Common myeloid progenitor, CD34-positive (primary cell): ENCODE measurements at regions of chr11 and their contacts with region 1.

Region 1: GRCh38 chr11:33329705-33330329 is 72.6 kb downstream of the HIPK3 start:
- DNase-seq: peak; percentile 80 to 86 (median 82)
- H3K4me3 ChIP-seq: no peak overlapping the region
- H3K27ac ChIP-seq: no peak overlapping the region
- H3K4me1 ChIP-seq: peaks cover under 1 to 20% (median 8%) of the 10 kb centered on the region in 4 experiments
- H3K27me3 ChIP-seq: no peaks in the 10 kb centered on the region

Region 2: DNA sequence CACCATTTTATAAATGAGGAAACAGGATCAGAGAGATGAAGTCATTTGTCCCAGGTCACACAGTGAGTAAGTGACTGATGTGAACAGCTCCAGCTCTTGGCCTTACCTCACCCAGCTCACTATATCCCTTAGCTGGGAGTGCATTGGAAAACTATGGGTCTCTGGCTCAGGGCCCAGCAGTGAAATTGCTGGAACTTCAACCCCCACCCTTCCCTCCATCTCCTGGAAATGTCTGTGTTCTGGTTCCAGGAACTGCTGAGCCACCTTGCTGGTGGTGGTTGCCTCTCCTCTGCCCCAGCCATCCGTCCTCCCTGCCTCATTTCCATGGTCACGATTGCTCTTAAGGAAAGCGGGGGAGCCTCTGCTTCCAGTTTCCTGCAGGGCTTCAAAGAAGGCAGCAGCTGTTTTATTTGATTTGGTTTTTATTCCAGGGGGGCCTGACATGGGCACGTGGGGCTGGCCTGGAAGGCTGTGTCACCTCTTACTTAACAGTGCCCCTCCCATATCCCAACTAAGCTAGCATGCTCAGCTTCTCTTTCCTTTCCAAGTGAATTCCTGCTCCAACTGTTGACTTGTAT is 122.3 kb before region 1 on chr11:
- CTCF ChIA-PET with region 1: no interaction called
- POLR2A ChIA-PET with region 1: no interaction called
- DNase-seq: no peak
- H3K4me3 ChIP-seq: no peak overlapping the region
- H3K27ac ChIP-seq: no peak overlapping the region
- H3K4me1 ChIP-seq: peaks cover 0 to 12% (median 0%) of the 10 kb centered on the region in 4 experiments
- H3K27me3 ChIP-seq: no peaks in the 10 kb centered on the region

Region 3: DNA sequence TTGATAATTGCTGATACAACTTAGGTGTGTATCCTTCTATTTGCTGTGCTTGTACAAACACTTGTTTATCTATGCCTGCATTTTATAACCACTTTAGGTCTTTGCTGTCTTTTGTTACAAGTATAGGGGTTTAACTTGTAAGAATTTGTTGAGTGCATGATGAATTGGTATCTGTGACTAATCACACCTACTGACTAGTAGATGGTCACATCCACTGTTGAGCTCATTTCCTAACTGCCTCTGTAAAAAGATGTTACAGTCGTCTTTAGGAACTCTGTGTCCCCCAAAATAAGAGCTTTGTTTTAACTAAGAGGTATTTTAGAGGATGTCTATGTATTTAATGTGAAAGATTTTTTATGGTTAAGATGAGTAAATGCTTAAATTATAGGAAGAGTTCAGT is 12.2 kb before region 1 on chr11:
- CTCF ChIA-PET with region 1: interaction called, 12 read pairs
- POLR2A ChIA-PET with region 1: no interaction called
- DNase-seq: peak in 1 of 3 donors; percentile 40
- H3K4me3 ChIP-seq: no peak overlapping the region
- H3K27ac ChIP-seq: no peak overlapping the region
- H3K4me1 ChIP-seq: peaks cover 13 to 31% (median 23%) of the 10 kb centered on the region in 4 experiments
- H3K27me3 ChIP-seq: no peaks in the 10 kb centered on the region

Region 4: GRCh38 chr11:33362051-33362910 is 32.5 kb after region 1 on chr11:
- CTCF ChIA-PET with region 1: no interaction called
- POLR2A ChIA-PET with region 1: no interaction called
- DNase-seq: peak; percentile 54 to 81 (median 74)
- H3K4me3 ChIP-seq: peak overlapping the region in 1 of 7 experiments; percentile 15
- H3K27ac ChIP-seq: no peak overlapping the region
- H3K4me1 ChIP-seq: peaks cover 0 to 2% (median 0%) of the 10 kb centered on the region in 4 experiments
- H3K27me3 ChIP-seq: peaks cover 0 to 4% (median 0%) of the 10 kb centered on the region in 5 experiments